GM13976 (cell line): ENCODE measurements at regions of chr17 and their contacts with region 1.

Region 1: GRCh38 chr17:50001140-50001714 is 6.2 kb upstream of the DLX3 start:
- DNase-seq: no peak
- CTCF ChIP-seq: no peak

Region 2: GRCh38 chr17:49567871-49568694 is 433.1 kb before region 1 on chr17:
- in situ Hi-C with region 1: loop called (anchors 10 kb)
- DNase-seq: peak; percentile 85
- CTCF ChIP-seq: peak; percentile 98

Region 3: GRCh38 chr17:49861150-49861892 is 139.9 kb before region 1 on chr17:
- in situ Hi-C with region 1: loop called (anchors 10 kb)
- DNase-seq: peak; percentile 85
- CTCF ChIP-seq: peak; percentile 67